CD14-positive monocyte (primary cell): ENCODE measurements at regions of chr15 and their contacts with region 1.

Region 1: DNA sequence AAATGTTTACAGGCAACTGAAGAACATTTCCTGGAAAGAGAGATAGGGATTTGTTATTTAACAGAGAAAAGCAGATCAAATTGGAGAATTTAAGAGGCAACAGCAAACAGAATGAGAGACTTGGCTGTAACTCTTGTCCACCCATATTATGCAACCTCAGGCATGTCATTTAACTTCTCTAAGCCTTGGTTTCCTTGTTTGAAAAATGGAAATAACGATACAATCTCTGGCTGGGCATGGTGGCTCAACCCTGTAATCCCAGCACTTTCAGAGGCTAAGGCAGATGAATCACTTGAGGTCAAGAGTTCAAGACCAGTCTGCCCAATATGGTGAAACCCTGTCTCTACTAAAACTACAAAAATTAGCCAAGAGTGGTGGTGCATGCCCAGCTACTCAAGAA is 23.7 kb downstream of the ARRDC4 start:
- DNase-seq: peak; percentile 43 to 63 (median 54)
- H3K4me3 ChIP-seq: no peak overlapping the region
- H3K4me3 Mint-ChIP-seq: no peak overlapping the region
- H3K27ac ChIP-seq: peak overlapping the region in 1 of 2 donors; percentile 27
- H3K27ac Mint-ChIP-seq: peak overlapping the region in 4 of 7 donors; percentile 13 to 73 (median 52)
- H3K4me1 ChIP-seq: peaks cover 9 to 13% of the 10 kb centered on the region in 2 donors
- H3K4me1 Mint-ChIP-seq: peaks cover 13% of the 10 kb centered on the region
- H3K27me3 ChIP-seq: no peaks in the 10 kb centered on the region
- H3K27me3 Mint-ChIP-seq: peaks cover 0 to 3% (median 0%) of the 10 kb centered on the region in 3 donors
- CTCF ChIP-seq: no peak

Region 2: DNA sequence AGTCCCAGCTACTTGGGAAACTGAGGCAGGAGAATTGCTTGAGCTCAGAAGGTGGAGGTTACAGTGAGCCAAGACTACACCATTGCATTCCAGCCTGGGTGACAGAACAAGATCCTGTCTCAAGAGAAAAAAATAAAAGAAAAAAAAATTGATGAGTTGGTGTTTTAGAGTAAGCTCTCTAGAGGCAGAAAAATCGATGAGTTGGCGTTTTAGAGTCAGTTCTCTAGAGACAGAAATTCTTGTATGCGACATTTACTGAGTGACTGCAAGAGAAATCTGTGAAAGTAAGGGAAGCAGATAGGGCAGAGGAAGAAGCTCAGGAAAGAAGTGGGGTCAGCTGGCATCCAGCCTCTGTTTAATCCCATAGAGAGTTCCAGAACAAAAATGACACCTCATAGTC is 322.4 kb before region 1 on chr15:
- intact Hi-C with region 1: no loop called
- DNase-seq: no peak
- H3K4me3 ChIP-seq: no peak overlapping the region
- H3K4me3 Mint-ChIP-seq: no peak overlapping the region
- H3K27ac ChIP-seq: no peak overlapping the region
- H3K27ac Mint-ChIP-seq: no peak overlapping the region
- H3K4me1 ChIP-seq: no peaks in the 10 kb centered on the region
- H3K4me1 Mint-ChIP-seq: no peaks in the 10 kb centered on the region
- H3K27me3 ChIP-seq: no peaks in the 10 kb centered on the region
- H3K27me3 Mint-ChIP-seq: peaks cover 0 to 4% (median 2%) of the 10 kb centered on the region in 3 donors
- CTCF ChIP-seq: no peak

Region 3: GRCh38 chr15:98085003-98085639 is 101.0 kb after region 1 on chr15:
- intact Hi-C with region 1: loop called in 1 of 2 experiments (anchors 10 kb)
- DNase-seq: peak; percentile 39 to 70 (median 48)
- H3K4me3 ChIP-seq: no peak overlapping the region
- H3K4me3 Mint-ChIP-seq: no peak overlapping the region
- H3K27ac ChIP-seq: no peak overlapping the region
- H3K27ac Mint-ChIP-seq: peak overlapping the region in 1 of 7 donors; percentile 35
- H3K4me1 ChIP-seq: no peaks in the 10 kb centered on the region
- H3K4me1 Mint-ChIP-seq: peaks cover 3% of the 10 kb centered on the region
- H3K27me3 ChIP-seq: no peaks in the 10 kb centered on the region
- H3K27me3 Mint-ChIP-seq: peaks cover 0 to 6% (median 1%) of the 10 kb centered on the region in 3 donors
- CTCF ChIP-seq: peak; percentile 73